ENCODE measurements at regions of chr11 and their contacts with region 1.

Region 1: DNA sequence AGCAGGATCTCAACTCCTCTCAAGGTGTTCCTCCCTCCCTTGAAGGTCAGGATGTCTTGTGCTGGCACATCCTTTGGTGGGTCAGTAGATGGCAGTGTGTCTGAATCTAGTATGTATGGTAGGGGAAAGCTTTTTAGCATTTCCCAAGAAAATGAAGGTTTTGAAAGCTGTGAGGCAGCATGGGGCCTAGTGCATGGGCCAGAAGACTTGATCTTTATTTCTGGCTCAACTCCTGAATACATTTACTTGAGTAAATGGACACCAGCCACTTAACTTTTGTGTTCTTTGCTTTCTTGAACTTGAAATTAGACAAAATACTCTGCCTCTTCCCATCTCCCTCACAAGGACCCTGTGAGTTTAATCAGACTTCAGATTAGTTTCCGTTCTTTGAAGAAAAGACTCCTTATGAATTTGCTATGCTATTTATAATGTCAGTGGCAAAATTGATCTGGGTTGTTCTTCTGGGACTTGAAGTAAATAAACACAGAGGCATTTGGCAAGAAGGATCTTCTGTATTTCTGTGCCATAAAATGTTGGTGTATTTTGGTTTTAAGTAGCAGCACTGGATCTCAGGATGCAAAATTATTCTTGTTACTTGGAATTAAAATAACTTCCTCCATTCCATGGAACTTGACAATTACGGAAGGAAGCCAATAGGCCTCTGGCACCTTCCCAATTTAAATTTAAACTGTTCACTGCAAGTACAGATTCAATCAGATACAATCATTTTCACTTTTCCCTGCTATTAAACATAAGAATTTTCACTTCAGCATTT is 288.8 kb downstream of the CASP12 start:
- DNase-seq: peak; percentile 56 to 75
- H3K4me3 ChIP-seq: no peak overlapping the region
- H3K4me3 Mint-ChIP-seq: no peak overlapping the region
- H3K27ac Mint-ChIP-seq: no peak overlapping the region
- H3K4me1 ChIP-seq: 0 out of 2 replicates have a peak, but pooled peaks cover 7% of the 10 kb centered on the region
- H3K4me1 Mint-ChIP-seq: no peaks in the 10 kb centered on the region
- H3K27me3 ChIP-seq: no peaks in the 10 kb centered on the region
- H3K27me3 Mint-ChIP-seq: no peaks in the 10 kb centered on the region
- CTCF ChIP-seq: peak; percentile 76 to 98

Region 2: GRCh38 chr11:103927535-103927934 is 682.0 kb before region 1 on chr11:
- CTCF ChIA-PET with region 1: no interaction called
- POLR2A ChIA-PET with region 1: no interaction called
- intact Hi-C with region 1: loop called (anchors 10 kb)
- DNase-seq: no peak
- H3K4me3 ChIP-seq: no peak overlapping the region
- H3K4me3 Mint-ChIP-seq: no peak overlapping the region
- H3K27ac Mint-ChIP-seq: no peak overlapping the region
- H3K4me1 ChIP-seq: peaks cover 54% of the 10 kb centered on the region
- H3K4me1 Mint-ChIP-seq: peaks cover 51% of the 10 kb centered on the region
- H3K27me3 ChIP-seq: no peaks in the 10 kb centered on the region
- H3K27me3 Mint-ChIP-seq: no peaks in the 10 kb centered on the region
- CTCF ChIP-seq: peak; percentile 47 to 61

Region 3: GRCh38 chr11:104151404-104152204 is 457.9 kb before region 1 on chr11:
- CTCF ChIA-PET with region 1: no interaction called
- POLR2A ChIA-PET with region 1: no interaction called
- intact Hi-C with region 1: no loop called
- DNase-seq: no peak
- H3K4me3 ChIP-seq: no peak overlapping the region
- H3K4me3 Mint-ChIP-seq: no peak overlapping the region
- H3K27ac Mint-ChIP-seq: no peak overlapping the region
- H3K4me1 ChIP-seq: 0 out of 2 replicates have a peak, but pooled peaks cover 3% of the 10 kb centered on the region
- H3K4me1 Mint-ChIP-seq: no peaks in the 10 kb centered on the region
- H3K27me3 ChIP-seq: no peaks in the 10 kb centered on the region
- H3K27me3 Mint-ChIP-seq: no peaks in the 10 kb centered on the region
- CTCF ChIP-seq: peak; percentile 25 to 33

Region 4: DNA sequence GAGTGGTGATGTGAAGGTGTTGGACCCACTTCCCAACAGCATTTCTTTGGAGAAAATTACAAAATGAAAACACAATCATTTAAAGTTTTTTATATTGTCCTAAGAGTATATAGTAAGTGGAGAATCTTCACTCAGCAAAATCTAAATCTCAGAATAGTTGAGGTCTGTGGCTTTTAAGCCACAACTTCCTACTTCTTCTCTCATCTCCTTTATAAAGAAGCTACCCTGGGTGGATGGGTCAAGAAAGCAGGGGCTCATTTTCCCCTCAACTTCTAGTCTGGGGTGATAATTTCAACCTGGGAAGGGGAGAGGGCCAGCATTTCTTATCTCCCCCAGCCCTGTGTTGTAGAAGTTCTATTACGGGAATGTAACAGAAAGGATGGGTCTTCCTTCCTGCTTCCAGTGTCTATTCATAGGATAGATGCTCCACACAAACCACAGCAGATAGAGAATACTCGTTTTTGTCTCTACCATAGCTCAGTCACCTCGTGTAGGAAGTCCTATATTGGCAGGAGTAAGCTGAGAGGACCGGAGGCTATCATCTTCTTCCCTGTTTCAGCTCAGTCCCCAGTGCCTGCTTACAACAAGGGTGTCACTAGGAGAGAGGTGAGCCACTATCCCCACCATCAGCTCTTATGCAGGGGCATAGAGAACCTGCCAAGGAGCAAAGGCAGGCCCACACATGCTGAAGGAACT is 52.7 kb before region 1 on chr11:
- CTCF ChIA-PET with region 1: no interaction called
- POLR2A ChIA-PET with region 1: no interaction called
- intact Hi-C with region 1: no loop called
- DNase-seq: no peak
- H3K4me3 ChIP-seq: no peak overlapping the region
- H3K4me3 Mint-ChIP-seq: no peak overlapping the region
- H3K27ac Mint-ChIP-seq: no peak overlapping the region
- H3K4me1 ChIP-seq: no peaks in the 10 kb centered on the region
- H3K4me1 Mint-ChIP-seq: no peaks in the 10 kb centered on the region
- H3K27me3 ChIP-seq: no peaks in the 10 kb centered on the region
- H3K27me3 Mint-ChIP-seq: peaks cover 7% of the 10 kb centered on the region
- CTCF ChIP-seq: no peak

Region 5: DNA sequence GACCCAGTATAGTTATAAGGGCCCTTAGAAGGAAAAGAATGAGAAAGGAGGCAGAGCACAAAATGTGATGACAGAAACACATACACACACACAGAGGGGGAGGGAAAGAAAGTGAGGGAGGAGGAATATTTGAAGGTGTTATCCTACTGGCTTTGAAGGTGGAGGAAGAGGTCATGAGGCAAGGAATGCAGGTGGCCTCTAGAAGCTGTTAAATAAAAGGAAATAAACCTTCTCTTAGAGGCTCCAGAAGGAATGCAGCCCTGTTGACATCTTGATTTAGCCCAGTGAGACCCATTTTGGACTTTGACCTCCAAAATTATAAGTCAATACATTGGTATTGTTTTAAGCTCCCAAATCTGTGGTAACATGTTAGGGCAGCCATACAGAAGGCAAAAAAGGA is 24.8 kb after region 1 on chr11:
- CTCF ChIA-PET with region 1: no interaction called
- POLR2A ChIA-PET with region 1: no interaction called
- intact Hi-C with region 1: loop called (anchors 1 kb)
- DNase-seq: peak; percentile 48 to 56
- H3K4me3 ChIP-seq: no peak overlapping the region
- H3K4me3 Mint-ChIP-seq: peak overlapping the region; percentile 51
- H3K27ac Mint-ChIP-seq: peak overlapping the region; percentile 64
- H3K4me1 ChIP-seq: peaks cover 34% of the 10 kb centered on the region
- H3K4me1 Mint-ChIP-seq: peaks cover 40% of the 10 kb centered on the region
- H3K27me3 ChIP-seq: no peaks in the 10 kb centered on the region
- H3K27me3 Mint-ChIP-seq: no peaks in the 10 kb centered on the region
- CTCF ChIP-seq: no peak

Region 6: DNA sequence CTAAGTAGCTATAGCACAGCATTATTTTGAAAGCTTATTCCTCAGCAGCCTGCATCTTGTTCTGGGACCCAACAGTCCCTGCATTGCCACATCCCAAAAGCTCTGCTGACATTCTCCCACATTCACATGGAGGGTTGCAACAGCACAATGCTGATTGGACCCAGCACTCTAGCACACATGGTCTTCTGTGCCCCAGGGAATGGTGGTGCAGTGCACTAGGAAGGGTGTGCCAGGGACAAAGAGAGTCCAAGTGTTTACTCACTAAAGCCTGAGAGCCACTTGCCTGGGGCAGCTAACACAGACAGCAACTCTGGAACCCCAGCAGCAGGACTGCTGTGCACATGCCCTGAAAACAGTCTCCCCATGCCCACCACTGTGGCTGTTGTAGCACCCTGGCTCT is 148.5 kb after region 1 on chr11:
- CTCF ChIA-PET with region 1: no interaction called
- POLR2A ChIA-PET with region 1: no interaction called
- intact Hi-C with region 1: loop called (anchors 5 kb)
- DNase-seq: no peak
- H3K4me3 ChIP-seq: no peak overlapping the region
- H3K4me3 Mint-ChIP-seq: no peak overlapping the region
- H3K27ac Mint-ChIP-seq: no peak overlapping the region
- H3K4me1 ChIP-seq: no peaks in the 10 kb centered on the region
- H3K4me1 Mint-ChIP-seq: peaks cover 9% of the 10 kb centered on the region
- H3K27me3 ChIP-seq: no peaks in the 10 kb centered on the region
- H3K27me3 Mint-ChIP-seq: peaks cover 3% of the 10 kb centered on the region
- CTCF ChIP-seq: no peak

Region 7: GRCh38 chr11:104946907-104947306 is 337.4 kb after region 1 on chr11:
- CTCF ChIA-PET with region 1: no interaction called
- POLR2A ChIA-PET with region 1: no interaction called
- intact Hi-C with region 1: loop called (anchors 10 kb)
- DNase-seq: peak in 1 of 2 experiments; percentile 72
- H3K4me3 ChIP-seq: no peak overlapping the region
- H3K4me3 Mint-ChIP-seq: no peak overlapping the region
- H3K27ac Mint-ChIP-seq: no peak overlapping the region
- H3K4me1 ChIP-seq: no peaks in the 10 kb centered on the region
- H3K4me1 Mint-ChIP-seq: peaks cover 6% of the 10 kb centered on the region
- H3K27me3 ChIP-seq: no peaks in the 10 kb centered on the region
- H3K27me3 Mint-ChIP-seq: no peaks in the 10 kb centered on the region
- CTCF ChIP-seq: peak; percentile 54 to 74

Region 8: DNA sequence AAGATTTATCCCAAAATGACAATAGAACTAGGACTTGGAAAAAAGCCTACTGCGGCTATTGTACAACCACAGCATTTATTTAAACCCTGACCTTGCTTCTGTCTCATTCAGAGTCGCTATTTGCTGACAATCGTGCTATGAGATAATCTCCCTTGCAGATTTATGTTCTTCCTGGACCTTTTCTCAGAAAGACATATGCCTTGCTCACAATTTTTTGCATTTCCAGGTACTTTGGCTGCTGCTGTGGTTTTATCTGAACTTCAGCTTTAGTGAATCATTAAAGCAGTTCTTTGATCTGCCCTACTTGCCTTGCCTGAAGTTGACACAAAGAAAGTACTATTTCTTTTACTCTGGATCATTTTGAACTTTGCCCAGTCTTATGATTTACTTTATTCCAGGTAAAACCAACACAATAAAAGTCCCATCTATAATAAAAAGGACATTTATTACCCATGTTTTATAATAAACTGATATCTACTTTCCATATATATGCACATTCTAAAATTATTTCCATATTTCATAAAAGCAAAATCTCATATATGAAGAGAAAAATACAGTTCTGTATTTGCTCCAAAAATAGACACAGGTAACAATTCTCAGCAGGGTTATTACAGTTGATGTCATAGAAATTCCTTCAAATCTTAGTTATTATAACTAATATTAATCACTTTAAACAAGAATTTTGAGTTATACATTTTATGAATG is 593.5 kb after region 1 on chr11:
- CTCF ChIA-PET with region 1: no interaction called
- POLR2A ChIA-PET with region 1: no interaction called
- intact Hi-C with region 1: loop called (anchors 10 kb)
- DNase-seq: peak; percentile 80 to 84
- H3K4me3 ChIP-seq: no peak overlapping the region
- H3K4me3 Mint-ChIP-seq: peak overlapping the region; percentile 48
- H3K27ac Mint-ChIP-seq: peak overlapping the region; percentile 80
- H3K4me1 ChIP-seq: peaks cover 61% of the 10 kb centered on the region
- H3K4me1 Mint-ChIP-seq: peaks cover 28% of the 10 kb centered on the region
- H3K27me3 ChIP-seq: no peaks in the 10 kb centered on the region
- H3K27me3 Mint-ChIP-seq: no peaks in the 10 kb centered on the region
- CTCF ChIP-seq: no peak

Measured in Caco-2 (cell line).